Upper lobe of right lung (tissue), 1 donor: ENCODE measurements at regions of chr2 and their contacts with region 1.

Region 1: DNA sequence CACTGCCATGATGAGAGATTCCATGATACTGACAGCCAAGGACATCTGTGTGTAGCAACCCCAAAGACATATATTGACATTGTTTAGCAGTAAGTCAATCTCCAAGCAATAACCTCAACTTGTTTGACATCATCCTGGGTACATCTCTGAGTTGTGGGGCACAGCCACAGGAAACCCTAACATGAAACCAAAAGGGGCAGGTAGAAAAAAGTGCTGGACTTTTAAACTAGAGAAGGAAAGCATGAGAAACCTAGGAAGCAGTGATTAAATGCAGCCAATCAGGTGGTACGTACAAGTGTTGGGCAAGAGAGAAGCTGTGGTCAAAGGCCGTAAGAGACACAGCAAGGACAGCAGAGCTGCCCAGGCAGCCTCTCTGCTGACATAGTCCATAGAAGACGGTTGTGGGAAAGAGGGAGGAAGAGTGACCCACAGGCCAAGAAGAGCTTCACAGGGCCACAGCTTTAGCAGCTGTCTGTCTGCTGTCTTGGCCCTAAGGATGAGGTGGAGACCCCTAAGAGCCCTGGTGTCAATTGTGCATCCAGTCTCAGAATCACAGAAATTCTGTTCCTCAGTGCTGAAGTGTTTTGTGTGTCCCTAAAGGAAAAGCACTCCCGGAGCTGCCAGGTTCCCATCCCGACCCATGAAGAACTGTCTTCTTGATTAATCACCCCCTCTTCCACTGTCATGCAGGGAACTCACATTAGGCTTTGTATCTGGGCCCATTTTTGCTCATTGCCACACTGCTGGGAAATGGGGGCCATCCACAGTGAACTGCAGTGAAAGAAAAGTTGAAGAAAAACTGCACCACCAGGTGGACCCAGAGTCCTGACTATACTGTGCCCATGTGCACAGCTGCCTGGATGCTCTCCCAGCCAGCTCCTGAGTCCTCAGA is 25.4 kb upstream of the CHN1 start:
- DNase-seq: no peak
- ATAC-seq: peak; percentile 59
- H3K4me3 ChIP-seq: no peak overlapping the region
- H3K27ac ChIP-seq: peak overlapping the region; percentile 27
- H3K4me1 ChIP-seq: no peaks in the 10 kb centered on the region
- H3K27me3 ChIP-seq: no peaks in the 10 kb centered on the region
- CTCF ChIP-seq: peak; percentile 39

Region 2: DNA sequence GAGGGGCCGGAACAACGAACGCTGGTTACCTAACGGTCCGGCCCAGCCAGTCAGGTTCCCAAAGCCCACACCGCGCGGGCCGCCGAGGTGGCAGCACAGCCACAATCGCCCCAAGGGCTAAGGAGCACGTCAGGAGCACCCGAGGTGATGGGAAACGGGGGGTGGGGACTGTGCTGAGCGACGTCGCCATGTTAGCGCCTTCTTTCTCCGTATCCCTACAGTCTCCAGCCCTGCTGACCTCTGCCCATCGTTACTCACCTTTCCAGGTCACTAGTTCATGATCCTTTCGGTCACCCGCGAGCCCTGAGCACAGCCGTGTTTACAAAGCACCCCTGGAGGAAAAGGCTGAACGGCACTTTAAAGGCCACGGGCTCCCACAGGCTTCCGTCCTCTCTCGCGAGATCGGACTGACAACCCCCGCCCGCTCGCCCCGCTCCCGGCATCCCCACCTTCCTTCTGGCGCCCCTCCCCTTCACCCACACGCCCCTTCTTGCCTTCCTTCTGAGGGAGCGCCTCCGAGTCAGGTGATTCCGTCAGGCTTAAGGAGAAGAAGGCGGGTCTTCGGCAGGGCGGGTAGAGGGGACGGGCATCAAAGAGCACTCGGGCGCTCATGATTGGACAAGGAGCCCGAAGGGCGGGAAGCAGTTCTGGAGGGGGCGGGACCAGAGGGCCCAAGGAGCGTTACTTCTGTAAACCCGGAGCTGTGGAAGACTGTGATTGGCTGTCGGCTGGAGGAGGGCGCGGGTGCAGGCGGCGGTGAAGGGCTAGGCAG is 137.4 kb after region 1 on chr2 and contains the start of gene ATF2:
- intact Hi-C with region 1: no loop called
- DNase-seq: peak; percentile 99
- ATAC-seq: peak; percentile 98
- H3K4me3 ChIP-seq: peak within 1 kb of the TSS; percentile 73
- H3K27ac ChIP-seq: peak within 1 kb of the TSS; percentile 86
- H3K4me1 ChIP-seq: peaks cover 18% of the 10 kb centered on the region
- H3K27me3 ChIP-seq: no peaks in the 10 kb centered on the region
- CTCF ChIP-seq: no peak
- total RNA-seq, gene ATF2: 51.2 TPM

Region 3: DNA sequence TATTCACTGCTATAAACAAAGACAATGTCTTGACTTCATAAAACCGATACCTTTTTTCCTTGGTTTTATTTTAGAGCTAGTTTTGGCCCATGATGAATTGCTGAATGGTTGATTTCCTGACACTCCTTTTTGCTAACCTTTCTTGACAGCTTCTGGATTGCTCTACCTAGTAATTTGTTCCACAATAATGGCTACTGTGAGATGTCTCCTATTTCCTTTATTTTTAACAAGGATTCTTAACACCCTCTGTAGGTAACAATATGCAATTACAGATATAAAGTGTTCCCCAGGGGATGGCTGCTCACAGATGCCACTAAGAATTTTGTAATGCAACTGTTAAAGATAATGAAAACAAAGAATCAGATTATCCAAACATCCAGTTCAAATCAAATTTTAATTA is 251.7 kb after region 1 on chr2:
- intact Hi-C with region 1: loop called (anchors 10 kb)
- DNase-seq: no peak
- ATAC-seq: peak; percentile 56
- H3K4me3 ChIP-seq: no peak overlapping the region
- H3K27ac ChIP-seq: no peak overlapping the region
- H3K4me1 ChIP-seq: no peaks in the 10 kb centered on the region
- H3K27me3 ChIP-seq: no peaks in the 10 kb centered on the region
- CTCF ChIP-seq: peak; percentile 51